ENCODE measurements at regions of chr13 and their contacts with region 1.

Region 1: DNA sequence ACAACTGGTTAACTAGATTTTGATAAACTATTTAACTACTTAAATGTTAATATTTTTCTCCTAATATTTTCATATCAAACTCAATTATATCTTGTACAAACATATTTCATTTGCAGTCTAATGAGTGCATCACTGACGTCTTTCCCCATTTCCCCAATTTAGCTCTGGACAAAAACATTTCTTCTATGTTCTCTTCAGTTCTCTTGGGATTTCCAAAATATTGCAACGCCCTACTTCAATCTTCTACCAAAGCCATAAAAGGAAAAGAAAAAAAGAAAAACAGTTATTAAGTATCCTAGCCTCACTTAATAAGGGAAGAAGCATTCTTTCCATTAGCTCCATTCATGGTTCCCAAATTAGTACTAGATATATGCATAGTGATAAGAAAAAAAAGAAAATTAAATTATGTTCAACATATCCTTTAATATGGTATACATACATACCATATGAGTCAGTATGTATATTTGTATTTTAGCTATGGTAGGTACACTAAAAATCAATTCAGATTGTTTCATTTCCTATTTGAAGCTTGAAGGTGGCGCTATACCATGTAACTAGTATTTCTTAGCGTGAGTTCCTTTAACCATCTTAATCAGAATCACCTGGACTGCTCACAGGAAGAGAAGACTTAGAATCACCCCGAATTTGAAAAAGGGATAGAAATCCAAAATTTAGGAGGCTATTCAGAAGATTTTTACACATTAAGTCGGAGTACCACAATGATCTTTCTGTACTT is 9.9 kb downstream of the FBXL3 start:
- DNase-seq: no peak
- ATAC-seq: no peak
- H3K4me3 ChIP-seq: no peak overlapping the region
- H3K4me3 Mint-ChIP-seq: peak overlapping the region in 3 of 10 donors; percentile 25 to 66 (median 51)
- H3K27ac ChIP-seq: peak overlapping the region; percentile 3
- H3K27ac Mint-ChIP-seq: peak overlapping the region in 6 of 9 donors; percentile 3 to 66 (median 35)
- H3K4me1 ChIP-seq: peaks cover 21 to 25% of the 10 kb centered on the region in 2 donors
- H3K4me1 Mint-ChIP-seq: peaks cover 30 to 93% (median 75%) of the 10 kb centered on the region in 7 donors
- H3K27me3 ChIP-seq: no peaks in the 10 kb centered on the region
- H3K27me3 Mint-ChIP-seq: no peaks in the 10 kb centered on the region

Region 2: DNA sequence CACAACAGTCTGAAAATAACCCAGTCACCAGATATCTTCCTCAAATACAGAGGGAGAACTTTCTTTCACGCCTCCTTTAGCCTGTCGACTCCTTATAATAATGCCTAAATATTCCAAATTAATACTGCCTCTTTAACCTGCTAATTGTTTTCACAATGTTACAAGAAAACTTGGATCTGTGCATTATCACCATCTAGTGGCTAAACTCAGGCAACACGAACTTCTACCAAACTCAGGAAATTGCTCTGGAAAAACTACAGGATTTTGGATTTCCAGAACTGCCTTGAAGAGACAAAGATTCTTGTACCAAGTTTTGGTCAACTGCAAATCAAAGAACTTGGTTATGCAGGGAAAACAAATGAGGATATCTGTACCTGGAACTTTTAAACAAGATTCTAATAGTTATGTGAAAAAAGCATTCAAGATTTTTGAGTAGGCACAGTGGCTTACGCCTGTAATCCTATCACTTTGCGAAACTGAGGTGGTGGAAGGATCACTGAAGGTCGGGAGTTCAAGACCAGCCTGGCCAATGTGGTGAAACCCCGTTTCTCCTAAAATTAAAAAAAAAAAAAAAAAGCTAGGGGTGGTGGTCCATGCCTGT is 14.4 kb before region 1 on chr13:
- CTCF ChIA-PET with region 1: interaction called, 5 read pairs
- POLR2A ChIA-PET with region 1: interaction called, 170 read pairs
- intact Hi-C with region 1: loop called in 1 of 2 experiments (anchors 1 kb)
- DNase-seq: no peak
- ATAC-seq: no peak
- H3K4me3 ChIP-seq: no peak overlapping the region
- H3K4me3 Mint-ChIP-seq: peak overlapping the region in 1 of 10 donors; percentile 2
- H3K27ac ChIP-seq: peak overlapping the region; percentile 17
- H3K27ac Mint-ChIP-seq: peak overlapping the region in 6 of 9 donors; percentile 3 to 84 (median 70)
- H3K4me1 ChIP-seq: no peaks in the 10 kb centered on the region
- H3K4me1 Mint-ChIP-seq: peaks cover 7 to 68% (median 55%) of the 10 kb centered on the region in 7 donors
- H3K27me3 ChIP-seq: no peaks in the 10 kb centered on the region
- H3K27me3 Mint-ChIP-seq: no peaks in the 10 kb centered on the region

Region 3: GRCh38 chr13:77038907-77039480 is 21.9 kb after region 1 on chr13:
- CTCF ChIA-PET with region 1: no interaction called
- POLR2A ChIA-PET with region 1: interaction called, 3 read pairs
- intact Hi-C with region 1: loop called in 1 of 2 experiments (anchors 1 kb)
- DNase-seq: no peak
- ATAC-seq: no peak
- H3K4me3 ChIP-seq: no peak overlapping the region
- H3K4me3 Mint-ChIP-seq: no peak overlapping the region
- H3K27ac ChIP-seq: no peak overlapping the region
- H3K27ac Mint-ChIP-seq: peak overlapping the region in 1 of 9 donors; percentile 28
- H3K4me1 ChIP-seq: no peaks in the 10 kb centered on the region
- H3K4me1 Mint-ChIP-seq: peaks cover 0 to 14% (median 4%) of the 10 kb centered on the region in 7 donors
- H3K27me3 ChIP-seq: no peaks in the 10 kb centered on the region
- H3K27me3 Mint-ChIP-seq: peaks cover 0 to 1% (median 0%) of the 10 kb centered on the region in 5 donors

Measured in naive thymus-derived CD4-positive, alpha-beta T cell (primary cell).